ENCODE measurements at regions of chr1 and their contacts with region 1.

Region 1: GRCh38 chr1:151611832-151612500 is at the start of gene SNX27:
- DNase-seq: peak; percentile 95
- ATAC-seq: peak; percentile 93
- H3K4me3 Mint-ChIP-seq: peak within 1 kb of the TSS; percentile 99
- H3K27ac Mint-ChIP-seq: peak within 1 kb of the TSS; percentile 95
- H3K4me1 Mint-ChIP-seq: peaks cover 46% of the 10 kb centered on the region
- H3K27me3 Mint-ChIP-seq: peaks cover 6% of the 10 kb centered on the region
- total RNA-seq, gene SNX27: 28.5 to 29.1 TPM

Region 2: DNA sequence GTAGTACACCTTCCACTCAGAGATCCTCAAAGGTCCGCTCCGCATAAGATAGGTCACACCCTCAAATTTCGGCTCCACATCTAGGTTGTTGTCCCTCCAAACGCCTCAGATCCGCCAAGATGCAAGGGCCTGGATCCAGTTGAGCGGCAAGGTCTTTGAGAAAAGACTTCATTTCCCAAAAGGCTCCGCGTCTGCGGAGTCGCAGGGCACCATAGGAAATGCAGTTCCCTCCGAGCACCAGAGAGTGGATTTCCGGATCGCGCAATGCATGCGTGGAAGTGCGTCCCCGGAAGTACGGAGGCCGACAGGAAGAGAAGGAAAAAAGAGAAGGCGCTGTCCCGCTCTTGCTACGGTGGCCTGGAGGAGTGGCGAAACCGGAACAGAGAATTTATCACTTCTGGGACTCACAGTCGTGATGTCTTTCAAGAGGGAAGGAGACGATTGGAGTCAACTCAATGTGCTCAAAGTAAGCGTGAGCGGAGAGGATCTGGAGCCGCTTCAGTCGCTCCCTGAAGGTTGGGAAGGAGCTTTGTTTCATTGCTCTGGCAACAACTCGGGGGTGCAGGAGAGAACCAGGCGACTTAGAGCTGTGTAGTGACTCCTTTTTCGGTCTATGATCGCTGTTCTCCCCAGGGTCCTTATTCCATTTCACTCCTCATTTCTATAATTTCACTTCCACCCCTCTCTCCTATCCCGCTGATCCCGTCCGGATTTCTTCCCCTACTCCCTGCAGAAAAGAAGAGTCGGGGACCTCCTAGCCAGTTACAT is 446.0 kb before region 1 on chr1 and contains the starts of genes LYSMD1 and SCNM1:
- CTCF ChIA-PET with region 1: no interaction called
- POLR2A ChIA-PET with region 1: no interaction called
- intact Hi-C with region 1: loop called in 1 of 2 experiments (anchors 1 kb)
- DNase-seq: peak; percentile 98
- ATAC-seq: peak; percentile 96
- H3K4me3 Mint-ChIP-seq: peak within 1 kb of the TSS; percentile 92
- H3K27ac Mint-ChIP-seq: peak within 1 kb of the TSS; percentile 98
- H3K4me1 Mint-ChIP-seq: peaks cover 48% of the 10 kb centered on the region
- H3K27me3 Mint-ChIP-seq: no peaks in the 10 kb centered on the region
- total RNA-seq, gene LYSMD1: 4.3 to 5.1 TPM
- total RNA-seq, gene SCNM1: 64.3 to 90.8 TPM

Region 3: GRCh38 chr1:151510957-151511635 is 100.9 kb before region 1 on chr1 and contains the start of gene CGN:
- CTCF ChIA-PET with region 1: no interaction called
- POLR2A ChIA-PET with region 1: no interaction called
- intact Hi-C with region 1: loop called in 1 of 2 experiments (anchors 1 kb)
- DNase-seq: peak; percentile 91
- ATAC-seq: peak; percentile 98
- H3K4me3 Mint-ChIP-seq: peak within 1 kb of the TSS; percentile 80
- H3K27ac Mint-ChIP-seq: peak within 1 kb of the TSS; percentile 47
- H3K4me1 Mint-ChIP-seq: peaks cover 23% of the 10 kb centered on the region
- H3K27me3 Mint-ChIP-seq: no peaks in the 10 kb centered on the region
- total RNA-seq, gene CGN: 0.67 to 1.4 TPM

Region 4: GRCh38 chr1:151720974-151721787 is 109.2 kb after region 1 on chr1 and contains the start of gene RIIAD1:
- CTCF ChIA-PET with region 1: interaction called, 3 read pairs
- POLR2A ChIA-PET with region 1: no interaction called
- intact Hi-C with region 1: loop called in 1 of 2 experiments (anchors 1 kb)
- DNase-seq: peak; percentile 67
- ATAC-seq: peak; percentile 89
- H3K4me3 Mint-ChIP-seq: peak within 1 kb of the TSS; percentile 61
- H3K27ac Mint-ChIP-seq: no peak within 1 kb of the TSS
- H3K4me1 Mint-ChIP-seq: peaks cover 21% of the 10 kb centered on the region
- H3K27me3 Mint-ChIP-seq: peaks cover 55% of the 10 kb centered on the region
- total RNA-seq, gene RIIAD1: not detected

Region 5: GRCh38 chr1:151762941-151763921 is 151.3 kb after region 1 on chr1 and contains the start of gene MRPL9:
- CTCF ChIA-PET with region 1: no interaction called
- POLR2A ChIA-PET with region 1: no interaction called
- intact Hi-C with region 1: loop called in 1 of 2 experiments (anchors 1 kb)
- DNase-seq: peak; percentile 94
- ATAC-seq: peak; percentile 99
- H3K4me3 Mint-ChIP-seq: peak within 1 kb of the TSS; percentile 89
- H3K27ac Mint-ChIP-seq: peak within 1 kb of the TSS; percentile 95
- H3K4me1 Mint-ChIP-seq: peaks cover 24% of the 10 kb centered on the region
- H3K27me3 Mint-ChIP-seq: no peaks in the 10 kb centered on the region
- total RNA-seq, gene MRPL9: 139 to 184 TPM

Region 6: DNA sequence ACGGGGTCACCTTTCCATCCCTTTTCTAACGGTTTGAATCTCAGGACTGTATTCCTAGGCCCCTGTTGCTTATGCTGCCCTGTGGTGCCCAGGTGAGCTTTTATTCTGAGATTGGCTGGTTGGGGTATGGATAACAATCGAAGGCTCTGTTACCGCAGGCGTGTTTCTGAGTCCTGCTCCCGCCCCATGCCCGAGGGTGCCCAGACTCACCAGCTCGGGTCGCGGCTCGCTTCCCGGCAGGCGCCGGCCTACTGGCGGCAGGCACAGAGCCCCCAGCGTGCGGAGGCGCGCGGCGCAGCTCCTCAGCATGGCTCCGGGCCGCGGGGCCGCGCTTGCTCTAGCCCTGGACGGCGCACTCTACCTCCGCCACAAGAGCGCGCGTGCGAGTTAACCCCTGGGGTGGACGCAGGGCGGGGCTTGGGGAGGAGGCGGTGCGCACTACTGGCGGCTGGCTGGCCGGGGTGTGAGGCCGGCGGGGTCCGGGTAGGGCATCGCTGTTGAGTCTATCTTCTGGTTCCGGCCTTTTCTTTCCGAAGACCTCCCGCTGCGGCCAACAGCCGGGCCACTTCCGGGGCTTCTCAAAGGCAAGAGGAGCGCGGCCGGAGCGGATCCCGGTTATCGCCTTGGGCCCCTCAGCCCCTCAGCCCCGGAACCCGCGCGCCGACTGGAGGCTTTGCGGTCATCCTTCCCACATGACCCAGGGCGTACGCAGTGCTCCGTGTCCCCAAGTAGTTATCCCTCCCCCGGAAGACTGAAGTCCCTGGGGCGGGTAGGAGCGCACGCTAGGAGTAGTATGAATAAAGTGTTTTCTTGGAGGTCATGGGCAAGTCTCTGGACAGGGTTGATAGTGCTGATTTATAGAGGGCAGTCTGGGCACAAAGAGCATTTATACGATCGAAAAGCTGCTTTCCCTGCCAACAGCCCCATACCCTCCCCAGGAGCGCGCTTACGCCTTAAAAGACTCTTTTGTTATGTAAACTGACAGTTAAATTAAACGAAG is 297.5 kb after region 1 on chr1 and contains the start of gene THEM4:
- CTCF ChIA-PET with region 1: no interaction called
- POLR2A ChIA-PET with region 1: no interaction called
- intact Hi-C with region 1: loop called in 1 of 2 experiments (anchors 5 kb)
- DNase-seq: peak; percentile 98
- ATAC-seq: peak; percentile 93
- H3K4me3 Mint-ChIP-seq: peak within 1 kb of the TSS; percentile 82
- H3K27ac Mint-ChIP-seq: peak within 1 kb of the TSS; percentile 91
- H3K4me1 Mint-ChIP-seq: peaks cover 42% of the 10 kb centered on the region
- H3K27me3 Mint-ChIP-seq: no peaks in the 10 kb centered on the region
- total RNA-seq, gene THEM4: 23.9 to 26.0 TPM

Measured in activated CD4-positive, alpha-beta T cell treated with anti-CD3 and anti-CD28 coated beads for 36 hours (primary cell).